Heart right ventricle (tissue), 16 donors: ENCODE measurements at regions of chr3 and their contacts with region 1.

Region 1: DNA sequence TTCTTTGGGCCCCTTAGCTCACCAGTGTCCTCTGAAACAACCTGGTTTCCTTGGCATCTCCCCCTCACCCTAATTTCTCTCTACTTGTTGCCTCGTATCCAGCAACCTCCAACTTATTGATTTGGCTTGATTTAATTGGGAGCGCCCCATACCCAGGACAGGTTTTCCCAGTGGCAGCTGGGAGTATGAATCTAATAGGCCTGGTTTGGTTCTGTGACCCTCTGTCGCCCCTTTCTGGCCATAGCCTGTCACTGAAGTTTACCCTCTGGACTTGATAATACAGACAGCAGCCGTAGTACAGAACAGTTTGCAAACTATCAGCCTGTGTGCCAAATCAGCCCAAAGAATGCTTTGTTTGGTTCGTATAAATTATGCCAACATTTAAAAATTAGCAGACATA is 525.1 kb upstream of the GOLIM4 start:
- DNase-seq: no peak
- ATAC-seq: peak in 2 of 8 donors; percentile 57 to 79
- H3K4me3 ChIP-seq: no peak overlapping the region
- H3K27ac ChIP-seq: no peak overlapping the region
- H3K4me1 ChIP-seq: no peaks in the 10 kb centered on the region
- H3K27me3 ChIP-seq: peaks cover 0 to 8% (median 0%) of the 10 kb centered on the region in 7 donors
- CTCF ChIP-seq: peak in 6 of 9 donors; percentile 39 to 51 (median 45)

Region 2: GRCh38 chr3:168511428-168512014 is 109.3 kb before region 1 on chr3:
- intact Hi-C with region 1: loop called in 3 of 10 experiments (anchors 2 to 10 kb)
- DNase-seq: no peak
- ATAC-seq: no peak
- H3K4me3 ChIP-seq: no peak overlapping the region
- H3K27ac ChIP-seq: no peak overlapping the region
- H3K4me1 ChIP-seq: no peaks in the 10 kb centered on the region
- H3K27me3 ChIP-seq: peaks cover 0 to 33% (median 12%) of the 10 kb centered on the region in 7 donors
- CTCF ChIP-seq: peak in 8 of 9 donors; percentile 35 to 64 (median 54)

Region 3: DNA sequence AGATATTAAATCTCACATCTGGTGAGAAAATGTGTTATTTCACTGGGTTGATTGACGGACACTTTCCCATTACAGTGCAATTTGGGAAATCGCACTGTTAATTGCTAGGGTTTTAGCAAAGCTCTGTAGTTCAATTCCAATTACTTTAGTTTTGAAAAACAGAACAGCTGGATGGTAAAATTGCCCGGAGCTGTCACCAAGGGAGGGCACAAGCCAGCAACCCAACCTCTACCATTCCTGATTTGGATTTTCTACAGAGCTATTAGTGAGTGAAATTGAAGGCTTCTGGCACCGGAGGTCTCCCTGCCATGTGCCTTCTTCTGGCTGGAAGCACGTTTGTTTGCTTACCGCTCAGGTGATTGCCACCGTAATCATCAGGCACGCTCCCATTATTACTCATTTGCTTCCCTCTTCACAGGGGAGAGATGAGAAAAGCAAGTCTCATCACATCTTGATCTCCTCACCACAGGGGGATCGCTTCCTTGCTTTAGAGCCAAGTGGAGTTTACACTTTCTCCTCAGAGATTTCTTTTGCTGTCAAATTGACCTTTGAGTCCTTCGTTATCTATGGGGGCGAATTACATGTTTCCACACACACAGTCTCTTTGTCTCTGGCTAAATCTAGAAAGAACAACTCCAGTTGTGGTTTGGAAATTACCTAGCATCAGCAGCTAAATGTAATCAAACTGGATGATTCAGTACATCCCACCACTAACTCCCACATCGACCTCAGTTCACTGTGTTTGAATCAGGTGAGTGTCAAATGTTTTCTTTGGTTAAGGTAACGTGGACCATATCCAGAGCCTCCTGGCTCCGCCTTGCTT is 103.4 kb before region 1 on chr3:
- intact Hi-C with region 1: loop called in 3 of 10 experiments (anchors 2 to 10 kb)
- DNase-seq: no peak
- ATAC-seq: no peak
- H3K4me3 ChIP-seq: no peak overlapping the region
- H3K27ac ChIP-seq: no peak overlapping the region
- H3K4me1 ChIP-seq: no peaks in the 10 kb centered on the region
- H3K27me3 ChIP-seq: peaks cover 0 to 2% (median 0%) of the 10 kb centered on the region in 7 donors
- CTCF ChIP-seq: no peak

Region 4: DNA sequence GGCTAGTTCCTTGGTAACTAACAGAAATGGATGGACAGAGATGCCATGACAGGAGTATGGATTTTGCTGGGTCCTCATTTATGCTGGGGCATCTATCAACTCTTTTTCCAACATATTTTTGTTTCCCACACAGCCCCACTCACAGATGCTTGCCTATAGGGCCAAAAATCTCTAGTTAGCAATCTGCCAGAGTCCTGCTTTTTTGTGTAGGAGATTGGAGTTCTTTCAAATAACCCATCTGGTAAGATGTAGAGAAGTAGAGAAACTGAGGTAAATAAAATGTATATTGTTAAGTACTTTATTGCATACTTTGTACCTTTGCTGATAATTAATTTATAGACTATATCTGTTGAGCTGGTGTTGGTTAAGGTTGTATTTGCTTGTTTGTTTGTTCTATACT is 68.6 kb before region 1 on chr3:
- intact Hi-C with region 1: no loop called
- DNase-seq: no peak
- ATAC-seq: no peak
- H3K4me3 ChIP-seq: no peak overlapping the region
- H3K27ac ChIP-seq: no peak overlapping the region
- H3K4me1 ChIP-seq: no peaks in the 10 kb centered on the region
- H3K27me3 ChIP-seq: peaks cover 0 to 6% (median 0%) of the 10 kb centered on the region in 7 donors
- CTCF ChIP-seq: no peak

Region 5: DNA sequence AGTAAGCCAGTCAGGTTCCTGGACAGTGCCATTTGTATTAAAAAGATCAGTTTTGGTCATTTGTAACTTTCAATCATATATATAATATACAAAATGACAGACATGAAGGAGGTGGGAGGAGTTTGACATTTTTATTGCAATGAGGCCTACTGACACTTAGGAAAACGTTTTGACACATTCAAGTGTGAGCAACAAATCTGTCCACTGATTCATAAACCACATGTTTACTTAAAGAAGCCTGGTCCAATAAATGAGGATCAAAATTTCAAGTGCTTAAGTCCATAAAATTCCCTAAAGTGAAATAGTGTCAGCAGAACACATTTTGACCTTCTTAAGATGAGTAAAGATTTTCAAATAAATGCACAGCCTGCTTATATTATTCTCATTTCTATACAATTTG is 905.4 kb after region 1 on chr3:
- intact Hi-C with region 1: no loop called
- DNase-seq: no peak
- ATAC-seq: no peak
- H3K4me3 ChIP-seq: no peak overlapping the region
- H3K27ac ChIP-seq: no peak overlapping the region
- H3K4me1 ChIP-seq: peaks cover 0 to 21% (median 3%) of the 10 kb centered on the region in 9 donors
- H3K27me3 ChIP-seq: no peaks in the 10 kb centered on the region
- CTCF ChIP-seq: no peak